ENCODE measurements at regions of chr19 and their contacts with region 1.

Region 1: DNA sequence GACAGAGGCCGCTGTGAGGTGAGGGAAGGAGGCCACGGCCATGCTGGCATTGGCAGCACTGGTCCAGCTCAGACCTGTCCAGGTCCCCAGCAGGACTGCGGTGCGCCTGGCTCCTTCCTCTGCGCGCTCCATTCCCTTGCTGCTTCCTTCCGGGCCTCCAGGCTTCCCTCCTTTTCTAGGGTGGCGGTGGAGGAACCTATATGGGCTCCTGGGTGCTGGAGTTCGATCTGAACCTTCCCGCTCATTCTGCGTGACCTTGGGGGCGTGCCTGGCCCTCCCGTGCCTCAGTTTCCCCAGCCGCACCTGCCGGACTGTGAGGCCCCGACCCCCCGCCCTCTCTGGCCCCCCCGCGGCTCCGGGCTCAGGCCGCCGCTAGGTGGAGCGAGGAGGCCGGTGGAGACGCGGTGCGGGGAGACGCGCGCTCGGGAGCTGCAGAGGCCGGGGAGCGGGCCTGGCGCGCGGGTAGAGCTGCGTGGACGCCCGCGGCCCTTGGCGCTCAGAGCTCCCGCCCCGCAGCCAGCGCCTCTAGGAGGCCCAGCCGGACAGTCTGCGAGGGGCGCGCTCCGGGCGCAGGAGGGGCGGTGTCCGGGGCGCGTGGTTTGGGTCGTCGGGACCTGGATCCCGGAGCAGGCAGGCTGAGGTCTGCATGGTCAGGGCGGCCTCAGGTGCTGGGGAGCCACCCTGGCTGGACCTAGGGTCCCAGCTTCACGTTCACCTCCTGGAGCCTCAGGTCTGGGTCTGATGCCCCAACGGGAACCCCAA is 30.0 kb downstream of the EFNA2 start:
- DNase-seq: peak; percentile 28 to 69 (median 59)
- H3K4me3 ChIP-seq: no peak overlapping the region
- H3K27ac ChIP-seq: no peak overlapping the region
- H3K4me1 ChIP-seq: peaks cover 4 to 6% of the 10 kb centered on the region in 2 donors
- H3K27me3 ChIP-seq: peaks cover 33% of the 10 kb centered on the region
- CTCF ChIP-seq: peak; percentile 40 to 72 (median 60)
- POLR2A ChIP-seq: no peak

Region 2: GRCh38 chr19:1355568-1356507 is 40.2 kb after region 1 on chr19:
- intact Hi-C with region 1: no loop called
- DNase-seq: peak in 1 of 7 donors; percentile 47
- H3K4me3 ChIP-seq: peak overlapping the region in 2 of 4 donors; percentile 46 to 91
- H3K27ac ChIP-seq: peak overlapping the region in 4 of 5 donors; percentile 9 to 94 (median 71)
- H3K4me1 ChIP-seq: peaks cover 19 to 28% of the 10 kb centered on the region in 2 donors
- H3K27me3 ChIP-seq: no peaks in the 10 kb centered on the region
- CTCF ChIP-seq: no peak
- POLR2A ChIP-seq: peak in 1 of 2 donors; percentile 28

Region 3: GRCh38 chr19:1445185-1445931 is 129.7 kb after region 1 on chr19:
- intact Hi-C with region 1: loop called in 1 of 2 experiments (anchors 10 kb)
- DNase-seq: peak in 5 of 7 donors; percentile 59 to 75 (median 64)
- H3K4me3 ChIP-seq: peak overlapping the region in 1 of 4 donors; percentile 43
- H3K27ac ChIP-seq: peak overlapping the region in 1 of 5 donors; percentile 38
- H3K4me1 ChIP-seq: peaks cover 5 to 32% of the 10 kb centered on the region in 2 donors
- H3K27me3 ChIP-seq: peaks cover 42% of the 10 kb centered on the region
- CTCF ChIP-seq: peak; percentile 25 to 94 (median 72)
- POLR2A ChIP-seq: no peak